ENCODE measurements at regions of chr1 and their contacts with region 1.

Region 1: GRCh38 chr1:44730741-44731512 is at the start of gene RNU5D-1:
- DNase-seq: peak; percentile 90
- H3K4me3 ChIP-seq: peak within 1 kb of the TSS; percentile 46
- CTCF ChIP-seq: peak; percentile 72

Region 2: GRCh38 chr1:44377925-44378784 is 352.8 kb before region 1 on chr1:
- CTCF ChIA-PET with region 1: no interaction called
- POLR2A ChIA-PET with region 1: no interaction called
- DNase-seq: no peak
- H3K4me3 ChIP-seq: no peak overlapping the region
- CTCF ChIP-seq: peak; percentile 72

Region 3: DNA sequence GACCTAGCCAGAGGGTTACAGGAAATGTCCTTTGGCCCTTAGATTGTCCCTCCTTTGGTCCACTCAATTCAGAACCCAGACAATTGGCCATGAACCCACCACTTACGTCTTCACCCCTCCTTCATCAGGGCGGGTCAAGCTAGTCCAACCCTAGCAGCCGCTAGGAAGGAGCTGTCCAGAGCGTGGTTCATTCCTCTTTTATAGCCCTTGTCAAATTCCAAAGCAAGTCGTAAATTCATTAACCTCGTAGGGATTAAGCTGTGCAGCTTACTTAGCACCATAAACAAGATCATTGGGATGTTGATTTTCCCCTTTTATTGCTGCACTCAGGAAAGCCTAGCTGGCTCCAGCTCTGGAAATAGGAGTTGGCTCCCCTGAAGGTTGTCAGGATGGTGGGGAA is 146.8 kb before region 1 on chr1:
- CTCF ChIA-PET with region 1: no interaction called
- POLR2A ChIA-PET with region 1: no interaction called
- DNase-seq: no peak
- H3K4me3 ChIP-seq: no peak overlapping the region
- CTCF ChIP-seq: no peak

Region 4: GRCh38 chr1:44631647-44632539 is 99.0 kb before region 1 on chr1:
- CTCF ChIA-PET with region 1: interaction called, 17 read pairs
- POLR2A ChIA-PET with region 1: interaction called, 3 read pairs
- DNase-seq: no peak
- H3K4me3 ChIP-seq: peak overlapping the region; percentile 72
- CTCF ChIP-seq: no peak

Region 5: DNA sequence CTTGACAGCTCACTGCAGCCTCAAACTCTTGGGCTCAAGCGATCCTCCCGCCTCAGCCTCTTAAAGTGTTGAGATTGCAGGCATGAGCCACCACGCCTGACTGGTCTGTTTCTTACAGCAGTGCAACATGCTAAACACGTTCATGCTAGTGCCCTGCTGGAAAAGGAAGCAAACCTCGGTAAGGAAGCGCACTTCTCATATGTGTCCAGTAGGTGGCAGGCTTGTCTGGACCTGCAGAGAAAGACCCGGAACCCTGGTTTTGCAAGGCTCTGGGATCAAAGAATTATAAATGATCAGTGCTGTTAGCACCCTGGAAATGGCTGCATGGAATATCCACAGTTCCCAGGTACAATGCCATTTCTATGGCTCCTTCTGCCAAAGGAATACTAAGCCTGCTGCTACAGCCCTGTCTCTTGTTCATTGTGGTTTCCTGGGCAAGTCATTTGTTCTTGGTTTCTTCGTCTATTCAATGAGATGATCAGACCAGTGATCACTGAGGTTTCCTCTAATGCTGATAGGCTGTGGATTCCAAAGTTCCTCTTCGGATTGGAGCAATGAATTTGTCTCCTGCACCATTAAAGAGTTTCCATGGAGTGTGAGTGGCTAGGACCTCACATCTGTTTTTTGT is 15.9 kb before region 1 on chr1:
- CTCF ChIA-PET with region 1: interaction called, 217 read pairs
- POLR2A ChIA-PET with region 1: no interaction called
- DNase-seq: no peak
- H3K4me3 ChIP-seq: no peak overlapping the region
- CTCF ChIP-seq: peak; percentile 88

Region 6: DNA sequence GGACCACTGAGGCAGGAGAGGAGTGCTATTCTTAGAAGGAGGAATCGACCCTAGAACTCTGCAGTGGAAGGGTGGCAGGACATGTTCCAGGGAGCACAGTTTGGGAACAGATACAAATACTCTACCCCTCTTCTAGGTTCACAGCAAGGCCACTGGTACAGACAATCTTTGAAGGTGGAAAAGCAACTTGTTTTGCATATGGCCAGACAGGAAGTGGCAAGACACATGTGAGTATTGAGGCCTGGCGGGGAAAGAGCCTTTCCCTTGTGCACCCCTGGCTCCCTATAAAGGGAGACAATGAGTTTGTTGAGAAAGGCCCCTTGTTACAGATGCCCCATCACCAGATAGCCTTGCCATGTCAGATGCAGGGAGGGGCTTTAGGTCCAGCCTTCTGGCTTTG is 26.5 kb after region 1 on chr1:
- CTCF ChIA-PET with region 1: interaction called, 18 read pairs
- POLR2A ChIA-PET with region 1: no interaction called
- DNase-seq: no peak
- H3K4me3 ChIP-seq: no peak overlapping the region
- CTCF ChIP-seq: no peak

Region 7: GRCh38 chr1:44780583-44781121 is 49.7 kb after region 1 on chr1:
- CTCF ChIA-PET with region 1: interaction called, 15 read pairs
- POLR2A ChIA-PET with region 1: interaction called, 20 read pairs
- DNase-seq: no peak
- H3K4me3 ChIP-seq: no peak overlapping the region
- CTCF ChIP-seq: no peak

Region 8: GRCh38 chr1:44799770-44800584 is 69.0 kb after region 1 on chr1 and contains the start of gene PLK3:
- CTCF ChIA-PET with region 1: interaction called, 5 read pairs
- POLR2A ChIA-PET with region 1: interaction called, 10 read pairs
- DNase-seq: peak; percentile 85
- H3K4me3 ChIP-seq: peak within 1 kb of the TSS; percentile 86
- CTCF ChIP-seq: peak; percentile 96

Region 9: GRCh38 chr1:44819608-44820327 is 88.8 kb after region 1 on chr1:
- CTCF ChIA-PET with region 1: interaction called, 9 read pairs
- POLR2A ChIA-PET with region 1: interaction called, 13 read pairs
- DNase-seq: peak; percentile 83
- H3K4me3 ChIP-seq: peak overlapping the region; percentile 59
- CTCF ChIP-seq: no peak

Measured in AG04449 (cell line).